ENCODE measurements at regions of chr11 and their contacts with region 1.

Region 1: DNA sequence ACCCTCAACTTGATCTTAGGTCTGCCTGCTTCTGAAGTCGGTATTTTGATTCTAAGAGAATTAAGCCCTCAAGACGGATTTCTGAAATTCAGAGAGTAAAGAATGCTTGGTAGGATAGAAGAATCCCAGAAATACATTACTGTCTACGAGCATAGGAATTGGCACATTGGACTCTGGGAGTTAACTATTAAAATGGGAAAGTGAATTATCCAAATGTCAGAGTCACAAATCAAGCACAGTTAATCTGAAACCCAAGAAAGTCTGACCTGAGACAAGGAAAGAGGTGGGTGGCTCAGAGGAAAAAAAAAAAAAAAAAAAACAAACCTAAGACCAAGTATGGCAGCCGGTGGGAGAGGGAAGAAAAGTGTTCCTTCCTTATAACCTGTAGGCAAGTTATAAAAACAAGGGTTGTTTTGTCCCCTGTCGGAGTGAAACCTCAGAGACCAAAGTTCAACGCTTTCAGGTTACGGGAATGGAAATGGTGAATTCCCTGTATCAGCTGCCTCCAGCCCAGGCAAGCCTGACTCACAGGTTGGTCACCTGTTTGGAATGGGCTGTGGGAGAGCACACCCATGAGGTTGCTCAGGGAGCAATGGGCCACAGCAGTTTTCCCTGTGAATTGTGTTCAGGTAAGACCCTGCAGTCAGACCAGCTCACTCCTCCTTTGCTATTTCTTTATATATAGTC is 139.0 kb downstream of the ETS1 start:
- DNase-seq: peak; percentile 88 to 95
- H3K4me3 ChIP-seq: no peak overlapping the region
- H3K4me3 Mint-ChIP-seq: peak overlapping the region; percentile 60
- H3K27ac Mint-ChIP-seq: peak overlapping the region; percentile 84
- H3K4me1 ChIP-seq: peaks cover 19% of the 10 kb centered on the region
- H3K4me1 Mint-ChIP-seq: peaks cover 14% of the 10 kb centered on the region
- H3K27me3 ChIP-seq: no peaks in the 10 kb centered on the region
- H3K27me3 Mint-ChIP-seq: no peaks in the 10 kb centered on the region
- CTCF ChIP-seq: peak in 1 of 2 experiments; percentile 59

Region 2: GRCh38 chr11:128157423-128158298 is 290.7 kb before region 1 on chr11:
- CTCF ChIA-PET with region 1: interaction called, 4 read pairs
- POLR2A ChIA-PET with region 1: no interaction called
- intact Hi-C with region 1: loop called (anchors 5 kb)
- DNase-seq: peak; percentile 65 to 80
- H3K4me3 ChIP-seq: no peak overlapping the region
- H3K4me3 Mint-ChIP-seq: peak overlapping the region; percentile 24
- H3K27ac Mint-ChIP-seq: no peak overlapping the region
- H3K4me1 ChIP-seq: no peaks in the 10 kb centered on the region
- H3K4me1 Mint-ChIP-seq: no peaks in the 10 kb centered on the region
- H3K27me3 ChIP-seq: peaks cover 2% of the 10 kb centered on the region; the same call in 1 of the 2 replicates
- H3K27me3 Mint-ChIP-seq: peaks cover 23% of the 10 kb centered on the region
- CTCF ChIP-seq: peak; percentile 86 to 99

Region 3: GRCh38 chr11:128210148-128210940 is 238.0 kb before region 1 on chr11:
- CTCF ChIA-PET with region 1: no interaction called
- POLR2A ChIA-PET with region 1: no interaction called
- intact Hi-C with region 1: loop called (anchors 1 kb)
- DNase-seq: peak; percentile 89 to 91
- H3K4me3 ChIP-seq: no peak overlapping the region
- H3K4me3 Mint-ChIP-seq: peak overlapping the region; percentile 62
- H3K27ac Mint-ChIP-seq: peak overlapping the region; percentile 80
- H3K4me1 ChIP-seq: peaks cover 46% of the 10 kb centered on the region
- H3K4me1 Mint-ChIP-seq: peaks cover 40% of the 10 kb centered on the region
- H3K27me3 ChIP-seq: no peaks in the 10 kb centered on the region
- H3K27me3 Mint-ChIP-seq: no peaks in the 10 kb centered on the region
- CTCF ChIP-seq: no peak

Region 4: GRCh38 chr11:128290106-128290840 is 158.1 kb before region 1 on chr11:
- CTCF ChIA-PET with region 1: no interaction called
- POLR2A ChIA-PET with region 1: no interaction called
- intact Hi-C with region 1: loop called (anchors 1 kb)
- DNase-seq: peak in 1 of 2 experiments; percentile 78
- H3K4me3 ChIP-seq: no peak overlapping the region
- H3K4me3 Mint-ChIP-seq: no peak overlapping the region
- H3K27ac Mint-ChIP-seq: no peak overlapping the region
- H3K4me1 ChIP-seq: no peaks in the 10 kb centered on the region
- H3K4me1 Mint-ChIP-seq: no peaks in the 10 kb centered on the region
- H3K27me3 ChIP-seq: no peaks in the 10 kb centered on the region; the same call in 1 of the 2 replicates
- H3K27me3 Mint-ChIP-seq: peaks cover 14% of the 10 kb centered on the region
- CTCF ChIP-seq: peak; percentile 88 to 95

Region 5: GRCh38 chr11:128323381-128323780 is 125.0 kb before region 1 on chr11:
- CTCF ChIA-PET with region 1: no interaction called
- POLR2A ChIA-PET with region 1: no interaction called
- intact Hi-C with region 1: loop called (anchors 1 kb)
- DNase-seq: no peak
- H3K4me3 ChIP-seq: no peak overlapping the region
- H3K4me3 Mint-ChIP-seq: no peak overlapping the region
- H3K27ac Mint-ChIP-seq: no peak overlapping the region
- H3K4me1 ChIP-seq: no peaks in the 10 kb centered on the region
- H3K4me1 Mint-ChIP-seq: no peaks in the 10 kb centered on the region
- H3K27me3 ChIP-seq: no peaks in the 10 kb centered on the region
- H3K27me3 Mint-ChIP-seq: peaks cover 22% of the 10 kb centered on the region
- CTCF ChIP-seq: no peak

Region 6: DNA sequence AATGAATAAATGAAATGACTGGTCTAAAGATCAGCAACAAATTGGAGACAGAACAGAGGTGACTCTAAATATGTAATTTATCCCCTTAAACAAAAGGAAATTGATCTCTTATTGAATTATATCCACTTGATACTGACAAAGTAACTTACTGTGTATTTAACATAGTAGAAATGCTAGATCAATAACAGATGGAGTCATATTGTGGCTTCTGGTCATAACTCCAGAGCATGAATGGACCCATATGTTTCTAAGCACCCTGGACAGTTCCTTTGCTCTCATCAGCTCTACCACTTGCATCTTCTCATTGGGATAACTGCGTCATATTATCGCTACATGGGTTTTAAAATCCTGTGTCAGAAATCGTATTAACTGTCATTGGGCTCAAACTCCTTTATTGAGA is 83.3 kb before region 1 on chr11:
- CTCF ChIA-PET with region 1: no interaction called
- POLR2A ChIA-PET with region 1: no interaction called
- intact Hi-C with region 1: no loop called
- DNase-seq: peak in 1 of 2 experiments; percentile 51
- H3K4me3 ChIP-seq: no peak overlapping the region
- H3K4me3 Mint-ChIP-seq: no peak overlapping the region
- H3K27ac Mint-ChIP-seq: no peak overlapping the region
- H3K4me1 ChIP-seq: no peaks in the 10 kb centered on the region
- H3K4me1 Mint-ChIP-seq: no peaks in the 10 kb centered on the region
- H3K27me3 ChIP-seq: no peaks in the 10 kb centered on the region
- H3K27me3 Mint-ChIP-seq: peaks cover 20% of the 10 kb centered on the region
- CTCF ChIP-seq: no peak

Region 7: DNA sequence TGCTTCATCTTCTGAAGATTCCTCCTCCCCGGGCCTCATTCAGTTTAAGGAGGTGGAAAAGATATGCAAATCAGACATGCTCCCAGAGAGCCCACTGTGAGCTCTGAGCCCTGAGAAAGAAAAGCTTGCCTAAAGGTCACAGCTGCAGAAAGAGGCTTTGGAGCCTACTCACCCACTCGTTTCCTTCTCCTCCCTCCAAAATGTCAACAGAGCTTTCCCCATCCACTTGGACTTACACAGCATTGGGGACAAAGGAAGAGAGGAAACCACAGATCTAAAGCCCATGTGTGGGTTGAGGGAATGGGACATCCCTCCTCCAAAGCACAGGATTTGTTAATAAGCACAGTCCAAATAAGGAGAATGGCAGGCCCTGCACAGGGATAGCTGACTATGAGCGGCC is 19.4 kb before region 1 on chr11:
- CTCF ChIA-PET with region 1: no interaction called
- POLR2A ChIA-PET with region 1: no interaction called
- intact Hi-C with region 1: no loop called
- DNase-seq: no peak
- H3K4me3 ChIP-seq: no peak overlapping the region
- H3K4me3 Mint-ChIP-seq: no peak overlapping the region
- H3K27ac Mint-ChIP-seq: no peak overlapping the region
- H3K4me1 ChIP-seq: peaks cover 13% of the 10 kb centered on the region
- H3K4me1 Mint-ChIP-seq: peaks cover 12% of the 10 kb centered on the region
- H3K27me3 ChIP-seq: no peaks in the 10 kb centered on the region
- H3K27me3 Mint-ChIP-seq: peaks cover 2% of the 10 kb centered on the region
- CTCF ChIP-seq: no peak

Region 8: DNA sequence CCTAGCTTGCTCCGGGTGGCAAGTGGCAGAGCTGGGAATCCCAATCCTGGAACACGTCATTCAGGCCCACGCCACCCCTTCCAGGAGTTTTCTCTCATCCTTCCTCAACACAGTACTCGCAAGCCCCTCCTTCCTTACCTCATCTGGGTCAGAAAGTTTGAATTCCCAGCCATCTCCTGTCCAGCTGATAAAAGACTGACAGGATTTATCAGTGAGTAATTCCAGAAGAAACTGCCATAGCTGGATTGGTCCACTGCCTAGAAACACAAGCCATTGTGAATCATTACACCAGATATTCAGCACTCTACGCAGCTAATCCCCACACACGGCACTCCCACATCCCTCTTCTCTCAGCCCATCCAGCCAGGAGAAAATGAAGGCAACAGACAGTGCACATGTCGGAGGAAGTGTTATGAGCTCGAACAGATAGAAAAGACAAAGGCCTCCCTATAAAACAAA is 15.1 kb after region 1 on chr11:
- CTCF ChIA-PET with region 1: no interaction called
- POLR2A ChIA-PET with region 1: no interaction called
- intact Hi-C with region 1: loop called (anchors 1 kb)
- DNase-seq: no peak
- H3K4me3 ChIP-seq: no peak overlapping the region
- H3K4me3 Mint-ChIP-seq: no peak overlapping the region
- H3K27ac Mint-ChIP-seq: no peak overlapping the region
- H3K4me1 ChIP-seq: no peaks in the 10 kb centered on the region
- H3K4me1 Mint-ChIP-seq: peaks cover 7% of the 10 kb centered on the region
- H3K27me3 ChIP-seq: no peaks in the 10 kb centered on the region
- H3K27me3 Mint-ChIP-seq: no peaks in the 10 kb centered on the region
- CTCF ChIP-seq: no peak

Measured in Caco-2 (cell line).